ENCODE measurements at regions of chr4 and their contacts with region 1.

Region 1: GRCh38 chr4:154329268-154329868 is 162.2 kb downstream of the DCHS2 start:
- DNase-seq: peak; percentile 44
- H3K4me3 ChIP-seq: no peak overlapping the region
- H3K27ac ChIP-seq: no peak overlapping the region
- H3K4me1 ChIP-seq: no peaks in the 10 kb centered on the region
- CTCF ChIP-seq: peak; percentile 75

Region 2: DNA sequence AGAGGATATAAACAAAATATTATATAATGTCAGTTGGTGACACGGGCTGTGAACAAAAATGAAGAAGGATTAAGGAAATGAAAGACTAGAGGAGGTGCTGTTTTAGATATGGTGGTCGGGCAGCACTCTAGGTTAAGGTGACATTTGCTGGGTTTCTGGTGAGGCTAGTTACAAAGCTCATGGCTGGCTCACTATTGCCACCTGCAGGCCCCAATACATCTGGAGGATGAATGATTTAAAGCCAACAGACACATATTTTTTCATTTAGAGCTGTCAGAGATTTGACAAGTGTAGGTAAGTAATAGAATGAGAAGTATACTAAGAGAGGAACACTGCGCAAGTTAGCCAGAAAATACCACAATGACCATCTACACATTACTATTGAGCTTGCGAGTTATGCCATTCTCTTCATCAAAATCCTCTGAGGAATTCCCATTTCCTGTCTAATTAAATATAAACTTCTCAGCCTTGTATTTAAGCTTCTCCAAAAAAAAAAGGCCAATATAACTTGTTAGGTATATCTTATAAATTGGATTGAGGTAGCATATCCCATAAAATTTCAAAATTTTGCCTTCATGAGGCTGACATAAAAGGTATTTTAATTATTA is 289.4 kb after region 1 on chr4:
- CTCF ChIA-PET with region 1: interaction called, 3 read pairs
- POLR2A ChIA-PET with region 1: interaction called, 3 read pairs
- intact Hi-C with region 1: loop called (anchors 1 kb)
- DNase-seq: peak; percentile 73
- H3K4me3 ChIP-seq: no peak overlapping the region
- H3K27ac ChIP-seq: no peak overlapping the region
- H3K4me1 ChIP-seq: peaks cover 9% of the 10 kb centered on the region
- CTCF ChIP-seq: peak; percentile 88